H1 (cell line): ENCODE measurements at regions of chr17 and their contacts with region 1.

Region 1: DNA sequence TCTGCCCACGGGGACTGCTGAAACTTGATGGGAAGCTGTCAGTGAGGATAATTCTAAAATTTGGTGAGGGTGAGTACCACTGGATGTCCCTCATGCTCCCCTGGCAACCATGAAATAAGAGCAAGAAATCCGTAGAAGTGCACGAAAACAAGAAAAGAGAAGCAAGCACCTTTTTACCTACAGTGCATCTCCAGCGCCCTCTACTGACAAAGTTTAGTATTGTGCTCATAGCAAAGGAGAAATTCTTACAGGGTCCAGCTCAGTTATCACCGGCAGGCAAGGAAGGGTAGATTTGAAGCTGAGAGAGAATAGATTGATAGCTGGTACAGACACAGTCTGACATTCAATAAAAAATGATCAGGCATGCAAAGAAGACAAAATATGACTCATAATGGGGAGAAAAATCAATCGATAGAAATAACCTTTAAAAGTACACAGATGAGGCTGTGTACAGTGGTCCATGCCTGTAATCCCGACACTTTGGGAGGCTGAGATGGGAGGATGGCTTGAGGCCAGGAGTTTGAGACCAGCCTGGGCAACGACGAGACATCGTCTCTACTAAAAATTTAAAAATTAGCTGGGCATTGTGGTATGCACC is 28.3 kb upstream of the TEX2 start:
- DNase-seq: no peak
- H3K4me3 ChIP-seq: no peak overlapping the region
- H3K27ac ChIP-seq: no peak overlapping the region
- H3K4me1 ChIP-seq: no peaks in the 10 kb centered on the region
- H3K27me3 ChIP-seq: no peaks in the 10 kb centered on the region
- CTCF ChIP-seq: peak in 2 of 3 experiments; percentile 47 to 69; a peak in 3 of 4 replicates
- EP300 ChIP-seq: no peak
- POLR2A ChIP-seq: no peak
- RAD21 ChIP-seq: peak; percentile 58 to 65

Region 2: DNA sequence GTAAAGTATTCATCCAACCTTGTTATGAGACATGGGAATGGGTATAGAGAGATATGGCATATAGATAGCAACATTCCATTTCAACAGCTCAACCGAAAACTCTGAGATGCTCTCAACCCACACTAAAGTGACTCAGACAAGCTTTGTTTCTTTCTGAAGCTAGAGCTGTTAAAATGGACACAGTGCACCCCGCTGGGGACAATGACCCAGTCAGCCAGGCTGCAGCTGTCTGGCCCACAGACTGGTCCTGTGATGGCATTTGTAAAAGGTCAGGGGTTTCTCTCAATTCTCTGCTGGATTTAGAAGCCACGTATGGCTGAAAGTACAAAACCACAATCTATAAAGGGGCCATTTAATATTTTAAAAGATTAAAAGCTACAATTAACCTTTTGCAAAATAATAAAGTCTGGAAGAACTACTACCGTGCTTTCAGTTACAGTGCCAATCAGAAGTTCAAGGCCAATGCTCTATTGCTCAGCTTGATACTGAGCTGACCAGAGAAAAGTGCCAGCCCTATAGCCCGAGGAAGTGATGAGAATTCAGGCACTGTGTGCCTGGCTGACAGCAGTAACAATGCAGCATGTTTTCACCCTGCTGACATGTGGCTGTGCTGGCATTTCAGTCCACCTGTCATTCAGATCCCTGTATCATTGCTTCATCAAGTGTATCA is 88.5 kb before region 1 on chr17:
- CTCF ChIA-PET with region 1: interaction called, 11 read pairs
- POLR2A ChIA-PET with region 1: no interaction called
- DNase-seq: no peak
- H3K4me3 ChIP-seq: no peak overlapping the region
- H3K27ac ChIP-seq: no peak overlapping the region
- H3K4me1 ChIP-seq: peaks cover 1 to 13% (median 6%) of the 10 kb centered on the region in 4 experiments; a peak in 5 of 7 replicates
- H3K27me3 ChIP-seq: no peaks in the 10 kb centered on the region
- CTCF ChIP-seq: no peak
- EP300 ChIP-seq: no peak
- POLR2A ChIP-seq: no peak
- RAD21 ChIP-seq: no peak

Region 3: DNA sequence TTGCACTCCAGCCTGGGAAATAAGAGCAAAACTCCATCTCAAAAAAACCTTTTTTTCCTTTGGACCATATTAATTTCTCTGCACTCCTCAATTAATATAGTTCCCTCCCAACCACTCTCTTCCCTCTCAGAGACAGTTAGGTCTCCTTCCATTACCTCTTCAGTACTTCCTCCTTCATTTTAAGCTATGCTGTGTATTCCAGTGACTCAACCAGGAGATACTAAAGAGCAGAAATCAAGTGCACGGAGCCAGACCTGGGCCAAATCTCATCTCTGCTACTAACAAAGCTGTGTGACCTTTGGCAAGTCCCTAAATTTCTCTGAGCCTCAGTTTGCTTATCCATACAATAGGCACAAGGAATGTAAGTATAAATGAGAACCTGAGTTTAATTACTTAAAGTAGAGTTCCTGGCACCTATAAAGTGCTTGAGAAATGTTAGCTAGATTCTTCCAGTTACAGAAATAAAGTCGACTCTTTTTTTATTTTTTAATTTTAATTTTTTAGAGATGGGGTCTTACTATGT is 90.8 kb after region 1 on chr17:
- CTCF ChIA-PET with region 1: no interaction called
- POLR2A ChIA-PET with region 1: no interaction called
- DNase-seq: no peak
- H3K4me3 ChIP-seq: no peak overlapping the region
- H3K27ac ChIP-seq: no peak overlapping the region
- H3K4me1 ChIP-seq: no peaks in the 10 kb centered on the region
- H3K27me3 ChIP-seq: no peaks in the 10 kb centered on the region
- CTCF ChIP-seq: no peak
- EP300 ChIP-seq: no peak
- POLR2A ChIP-seq: no peak
- RAD21 ChIP-seq: no peak